Mammary epithelial cell (primary cell): ENCODE measurements at regions of chr6 and their contacts with region 1.

Region 1: GRCh38 chr6:35443341-35444030 is 8.7 kb upstream of the FANCE start:
- DNase-seq: no peak
- H3K4me3 ChIP-seq: no peak overlapping the region
- H3K27ac ChIP-seq: no peak overlapping the region
- H3K4me1 ChIP-seq: peaks cover 9% of the 10 kb centered on the region
- H3K27me3 ChIP-seq: no peaks in the 10 kb centered on the region
- CTCF ChIP-seq: no peak

Region 2: DNA sequence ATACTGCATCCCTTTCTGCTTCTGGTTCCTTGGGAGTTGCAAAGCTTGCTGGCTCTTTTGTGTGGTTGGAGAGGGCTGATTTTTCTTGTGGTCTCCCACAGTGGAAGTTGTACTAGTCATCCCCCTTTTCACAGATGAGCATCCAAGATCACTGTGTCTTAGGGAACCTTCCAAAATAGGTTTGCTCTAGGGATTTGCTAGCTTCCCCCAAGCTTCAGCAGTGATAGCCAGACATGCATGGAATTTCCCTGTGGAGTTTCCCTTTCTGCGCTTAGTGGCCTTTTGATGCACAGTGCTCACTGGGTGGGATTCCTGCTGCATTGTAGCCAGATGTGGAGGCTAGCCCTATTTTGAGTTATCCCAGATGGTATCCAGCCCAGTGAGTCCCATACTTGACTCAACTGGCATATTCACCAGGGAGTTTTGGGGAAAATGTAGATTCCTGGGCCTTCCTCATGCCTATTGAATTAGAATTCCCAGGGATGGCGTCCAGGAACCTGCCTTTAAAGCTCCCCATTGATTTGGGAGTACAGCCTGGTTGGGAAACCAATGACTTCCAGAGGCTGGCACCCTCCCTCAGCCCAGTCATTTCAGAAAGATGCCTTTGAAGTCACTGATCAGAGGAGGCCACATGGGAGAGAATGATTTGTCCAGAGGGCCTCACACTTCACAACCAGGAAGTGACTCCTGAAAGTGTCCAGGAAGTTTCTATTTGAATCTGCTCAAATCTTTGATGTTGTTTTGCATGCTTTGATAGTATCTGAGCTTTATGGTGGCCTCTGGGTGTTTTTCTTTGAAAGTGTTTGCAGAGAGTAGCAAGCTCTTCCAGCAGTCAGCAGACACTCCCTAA is 75.2 kb before region 1 on chr6:
- CTCF ChIA-PET with region 1: no interaction called
- dilution Hi-C with region 1: loop called (anchors 5 kb)
- in situ Hi-C with region 1: no loop called
- intact Hi-C with region 1: no loop called
- DNase-seq: peak; percentile 46
- H3K4me3 ChIP-seq: no peak overlapping the region
- H3K27ac ChIP-seq: no peak overlapping the region
- H3K4me1 ChIP-seq: peaks cover 33% of the 10 kb centered on the region
- H3K27me3 ChIP-seq: no peaks in the 10 kb centered on the region
- CTCF ChIP-seq: no peak

Region 3: GRCh38 chr6:35381132-35381531 is 62.4 kb before region 1 on chr6:
- CTCF ChIA-PET with region 1: no interaction called
- dilution Hi-C with region 1: no loop called
- in situ Hi-C with region 1: no loop called
- intact Hi-C with region 1: no loop called
- DNase-seq: no peak
- H3K4me3 ChIP-seq: no peak overlapping the region
- H3K27ac ChIP-seq: no peak overlapping the region
- H3K4me1 ChIP-seq: peaks cover 6% of the 10 kb centered on the region
- H3K27me3 ChIP-seq: no peaks in the 10 kb centered on the region
- CTCF ChIP-seq: no peak

Region 4: DNA sequence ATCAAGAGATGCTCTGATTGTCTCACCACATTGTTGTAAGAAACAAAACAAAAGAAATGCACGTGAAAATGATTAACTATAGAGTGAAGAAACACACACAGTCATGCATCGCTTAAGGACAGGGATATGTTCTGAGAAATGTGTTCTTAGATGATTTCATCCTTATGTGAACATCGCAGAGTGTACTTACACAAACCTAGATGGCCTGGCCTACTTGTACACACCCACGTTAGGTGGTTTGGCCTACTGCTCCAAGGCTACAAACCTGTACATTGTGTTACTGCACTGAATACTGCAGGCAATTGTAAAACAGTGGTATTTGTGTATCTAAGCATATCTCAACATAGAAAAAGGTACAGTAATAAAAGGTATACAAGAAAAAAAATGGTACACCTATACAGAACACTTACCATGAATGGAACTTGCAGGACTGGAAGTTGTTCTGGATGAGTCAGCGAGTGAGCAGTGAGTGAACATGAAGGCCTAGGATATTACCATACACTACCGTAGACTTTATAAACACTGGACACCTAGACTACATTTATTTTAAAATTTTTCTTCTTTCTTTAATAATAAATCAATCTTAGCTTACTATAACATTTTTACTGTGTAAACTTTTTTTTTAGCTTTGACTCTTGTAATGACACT is 196.7 kb after region 1 on chr6:
- CTCF ChIA-PET with region 1: no interaction called
- dilution Hi-C with region 1: no loop called
- in situ Hi-C with region 1: no loop called
- intact Hi-C with region 1: no loop called
- DNase-seq: peak; percentile 65
- H3K4me3 ChIP-seq: no peak overlapping the region
- H3K27ac ChIP-seq: no peak overlapping the region
- H3K4me1 ChIP-seq: peaks cover 5% of the 10 kb centered on the region
- H3K27me3 ChIP-seq: no peaks in the 10 kb centered on the region
- CTCF ChIP-seq: no peak